K562 (cell line): ENCODE measurements at regions of chr22 and their contacts with region 1.

Region 1: DNA sequence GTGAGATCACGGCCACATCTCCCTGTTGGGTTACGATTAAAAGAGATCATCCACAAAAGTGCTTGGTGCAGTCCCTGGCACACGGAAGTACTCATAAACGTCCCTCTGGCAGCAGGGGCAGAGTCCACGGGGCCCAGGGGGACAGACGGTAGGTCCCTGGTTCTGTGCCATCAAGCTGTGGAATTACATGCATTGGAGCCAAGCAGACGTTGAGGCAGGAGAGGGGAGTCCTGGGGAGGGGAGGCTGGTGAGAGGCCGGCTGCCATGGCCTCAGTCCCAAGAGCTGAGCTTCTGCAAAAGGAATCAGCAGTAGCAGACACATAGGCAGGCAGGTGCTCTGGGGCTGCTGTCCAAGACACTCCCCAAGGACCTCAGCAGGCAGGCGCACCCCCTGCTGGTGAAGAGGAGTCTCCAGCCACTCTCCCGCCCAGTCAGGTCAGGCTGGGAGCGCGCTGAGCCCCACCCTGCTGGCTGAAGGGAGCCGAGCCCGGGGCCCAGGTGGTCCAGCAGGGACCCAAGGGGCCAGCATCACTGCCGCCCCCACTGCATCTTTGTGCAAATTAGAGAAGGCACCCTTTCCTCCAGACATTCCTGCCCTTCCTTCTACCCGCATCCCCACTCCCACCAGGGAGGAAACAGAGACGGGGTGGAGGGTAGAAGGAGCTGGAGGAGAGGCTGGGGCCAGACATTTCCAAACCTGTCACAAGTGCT is 7.6 kb upstream of the KCTD17 start:
- DNase-seq: peak; percentile 73 to 81 (median 74)
- ATAC-seq: peak; percentile 100
- H3K4me3 ChIP-seq: no peak overlapping the region
- H3K27ac ChIP-seq: no peak overlapping the region
- H3K4me1 ChIP-seq: peaks cover 0 to 7% of the 10 kb centered on the region in 2 experiments; a peak in 2 of 5 replicates
- H3K27me3 ChIP-seq: peaks cover 0 to 3% of the 10 kb centered on the region in 2 experiments; a peak in 1 of 5 replicates
- CTCF ChIP-seq: peak; percentile 75 to 85 (median 75)
- EP300 ChIP-seq: no peak
- POLR2A ChIP-seq: no peak
- RAD21 ChIP-seq: peak; percentile 58 to 74

Region 2: GRCh38 chr22:35712672-35713071 is 1331.3 kb before region 1 on chr22:
- CTCF ChIA-PET with region 1: no interaction called
- POLR2A ChIA-PET with region 1: no interaction called
- in situ Hi-C with region 1: no loop called
- intact Hi-C with region 1: no loop called
- DNase-seq: no peak
- ATAC-seq: no peak
- H3K4me3 ChIP-seq: no peak overlapping the region
- H3K27ac ChIP-seq: no peak overlapping the region
- H3K4me1 ChIP-seq: no peaks in the 10 kb centered on the region; a peak in 2 of 5 replicates
- H3K27me3 ChIP-seq: no peaks in the 10 kb centered on the region
- CTCF ChIP-seq: peak in 1 of 3 experiments; percentile 20; a peak in 1 of 6 replicates
- EP300 ChIP-seq: no peak
- POLR2A ChIP-seq: no peak
- RAD21 ChIP-seq: peak in 1 of 2 experiments; percentile 56; a peak in 2 of 4 replicates

Region 3: DNA sequence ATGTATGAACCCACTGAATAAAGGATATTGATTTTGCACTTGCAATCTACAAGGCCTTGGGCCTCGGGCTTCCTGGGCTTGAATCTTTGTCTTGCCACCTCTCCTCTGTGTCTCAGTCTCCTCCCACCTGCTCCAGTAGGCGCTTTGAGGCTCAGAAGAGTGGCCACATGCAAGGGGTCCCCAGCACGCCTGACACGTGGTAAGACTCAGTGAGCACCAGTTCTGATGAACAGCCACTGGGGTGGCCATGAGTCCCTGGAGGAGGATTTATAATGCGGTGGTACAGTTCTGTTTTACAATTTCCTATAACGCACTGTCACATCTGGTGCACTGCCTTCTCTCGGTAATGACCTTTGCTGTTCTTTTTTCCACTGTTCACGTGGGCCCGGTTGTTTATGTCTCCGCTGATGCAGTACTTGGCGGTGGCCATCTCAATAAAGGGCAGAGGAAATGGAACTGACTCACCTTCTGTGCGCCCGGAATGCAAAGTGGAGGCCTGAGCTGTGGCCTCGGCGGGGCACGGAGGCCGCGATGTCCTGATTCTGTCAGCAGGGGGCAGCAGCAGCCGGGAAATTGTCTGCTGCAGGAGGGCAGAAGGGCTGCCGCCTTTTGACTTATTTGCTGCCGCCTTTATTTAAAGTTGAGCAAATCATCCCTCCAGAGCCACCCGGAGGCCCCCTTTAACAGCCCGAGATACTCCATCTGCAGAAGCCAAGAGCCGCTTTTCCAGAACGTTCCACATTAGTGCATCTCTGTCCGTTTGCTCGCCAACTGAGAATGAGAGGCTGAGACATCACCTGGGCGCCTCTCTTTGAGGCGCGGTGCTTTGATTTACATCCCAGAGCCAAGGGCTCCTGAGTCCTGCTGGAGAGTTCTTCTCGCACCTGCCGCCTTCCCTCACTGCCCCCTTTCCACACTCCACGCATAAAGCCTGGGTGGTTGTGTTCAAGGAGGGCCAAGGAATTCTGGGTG is 262.0 kb before region 1 on chr22:
- CTCF ChIA-PET with region 1: no interaction called
- POLR2A ChIA-PET with region 1: no interaction called
- in situ Hi-C with region 1: no loop called
- intact Hi-C with region 1: loop called (anchors 10 kb)
- DNase-seq: peak; percentile 64 to 77 (median 75)
- ATAC-seq: peak; percentile 90
- H3K4me3 ChIP-seq: no peak overlapping the region
- H3K27ac ChIP-seq: no peak overlapping the region
- H3K4me1 ChIP-seq: no peaks in the 10 kb centered on the region; a peak in 1 of 5 replicates
- H3K27me3 ChIP-seq: peaks cover under 1 to 41% of the 10 kb centered on the region in 2 experiments; a peak in 4 of 5 replicates
- CTCF ChIP-seq: peak; percentile 79 to 85 (median 81)
- EP300 ChIP-seq: no peak
- POLR2A ChIP-seq: no peak
- RAD21 ChIP-seq: peak; percentile 73 to 80

Region 4: DNA sequence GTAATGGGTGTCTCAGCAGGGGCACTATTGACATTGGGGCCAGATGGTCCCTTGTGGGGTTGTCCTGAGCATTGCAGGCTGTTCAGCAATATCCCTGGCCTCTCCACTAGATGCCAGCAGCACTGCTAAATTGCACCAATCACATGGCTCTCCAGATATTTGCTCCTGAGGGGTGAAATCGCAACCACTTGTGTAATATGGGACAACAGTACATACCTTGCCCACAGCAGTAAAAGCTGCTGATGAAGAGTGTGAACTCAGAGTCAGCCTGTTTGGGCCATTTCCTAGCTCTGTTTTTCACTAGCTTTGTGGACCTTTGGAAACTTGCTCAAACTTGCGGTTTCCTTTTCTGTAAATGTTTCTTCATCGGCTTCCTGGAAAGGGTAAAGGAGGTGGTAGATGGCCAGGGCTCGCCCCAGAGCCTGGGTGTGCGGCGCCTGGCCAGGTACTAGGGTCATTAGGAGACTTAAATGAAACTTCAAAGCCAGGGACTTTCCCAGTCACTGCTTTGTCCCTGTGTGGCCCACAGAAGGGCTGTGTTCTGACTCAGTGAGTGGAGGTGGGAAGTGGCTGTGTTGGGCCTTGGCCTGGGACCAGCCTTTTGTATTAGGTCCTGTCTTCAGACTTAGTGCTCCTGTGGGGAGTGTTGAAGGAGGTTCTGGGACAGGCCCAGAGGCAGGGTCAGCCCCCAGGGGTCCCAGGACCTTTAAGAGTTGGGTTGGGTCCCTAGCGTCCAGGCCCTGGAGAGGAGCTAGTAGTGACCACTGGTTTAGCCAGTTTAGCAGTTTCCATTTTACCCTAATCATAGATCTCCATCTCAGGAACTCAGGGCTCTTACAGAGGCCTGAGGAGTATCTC is 170.1 kb before region 1 on chr22:
- CTCF ChIA-PET with region 1: no interaction called
- POLR2A ChIA-PET with region 1: no interaction called
- in situ Hi-C with region 1: no loop called
- intact Hi-C with region 1: loop called (anchors 10 kb)
- DNase-seq: peak; percentile 15 to 37 (median 20)
- ATAC-seq: peak; percentile 84
- H3K4me3 ChIP-seq: no peak overlapping the region
- H3K27ac ChIP-seq: no peak overlapping the region
- H3K4me1 ChIP-seq: 0 out of 5 replicates have a peak, but pooled peaks cover 0 to 2% of the 10 kb centered on the region in 2 experiments
- H3K27me3 ChIP-seq: peaks cover 4 to 26% of the 10 kb centered on the region in 2 experiments; a peak in 3 of 5 replicates
- CTCF ChIP-seq: peak; percentile 45 to 54 (median 48); a peak in 5 of 6 replicates
- EP300 ChIP-seq: no peak
- POLR2A ChIP-seq: no peak
- RAD21 ChIP-seq: peak; percentile 32 to 42; a peak in 3 of 4 replicates

Region 5: GRCh38 chr22:36986242-36986821 is 57.7 kb before region 1 on chr22:
- CTCF ChIA-PET with region 1: interaction called, 14 read pairs
- POLR2A ChIA-PET with region 1: interaction called, 3 read pairs
- in situ Hi-C with region 1: no loop called
- intact Hi-C with region 1: loop called (anchors 5 kb)
- DNase-seq: peak; percentile 43 to 59 (median 53)
- ATAC-seq: no peak
- H3K4me3 ChIP-seq: no peak overlapping the region
- H3K27ac ChIP-seq: no peak overlapping the region
- H3K4me1 ChIP-seq: peaks cover 13 to 17% of the 10 kb centered on the region in 2 experiments; a peak in 4 of 5 replicates
- H3K27me3 ChIP-seq: peaks cover 4 to 12% of the 10 kb centered on the region in 2 experiments; a peak in 4 of 5 replicates
- CTCF ChIP-seq: peak; percentile 55 to 83 (median 66)
- EP300 ChIP-seq: no peak
- POLR2A ChIP-seq: no peak
- RAD21 ChIP-seq: peak; percentile 29 to 63; a peak in 3 of 4 replicates

Region 6: GRCh38 chr22:37098976-37099591 is 55.1 kb after region 1 on chr22:
- CTCF ChIA-PET with region 1: no interaction called
- POLR2A ChIA-PET with region 1: no interaction called
- in situ Hi-C with region 1: no loop called
- intact Hi-C with region 1: no loop called
- DNase-seq: no peak
- ATAC-seq: peak; percentile 49; the same call in 1 of the 3 replicates
- H3K4me3 ChIP-seq: no peak overlapping the region
- H3K27ac ChIP-seq: no peak overlapping the region
- H3K4me1 ChIP-seq: no peaks in the 10 kb centered on the region
- H3K27me3 ChIP-seq: peaks cover 20 to 70% of the 10 kb centered on the region in 2 experiments; a peak in 3 of 5 replicates
- CTCF ChIP-seq: peak; percentile 22 to 28 (median 25); a peak in 3 of 6 replicates
- EP300 ChIP-seq: no peak
- POLR2A ChIP-seq: no peak
- RAD21 ChIP-seq: no peak

Region 7: DNA sequence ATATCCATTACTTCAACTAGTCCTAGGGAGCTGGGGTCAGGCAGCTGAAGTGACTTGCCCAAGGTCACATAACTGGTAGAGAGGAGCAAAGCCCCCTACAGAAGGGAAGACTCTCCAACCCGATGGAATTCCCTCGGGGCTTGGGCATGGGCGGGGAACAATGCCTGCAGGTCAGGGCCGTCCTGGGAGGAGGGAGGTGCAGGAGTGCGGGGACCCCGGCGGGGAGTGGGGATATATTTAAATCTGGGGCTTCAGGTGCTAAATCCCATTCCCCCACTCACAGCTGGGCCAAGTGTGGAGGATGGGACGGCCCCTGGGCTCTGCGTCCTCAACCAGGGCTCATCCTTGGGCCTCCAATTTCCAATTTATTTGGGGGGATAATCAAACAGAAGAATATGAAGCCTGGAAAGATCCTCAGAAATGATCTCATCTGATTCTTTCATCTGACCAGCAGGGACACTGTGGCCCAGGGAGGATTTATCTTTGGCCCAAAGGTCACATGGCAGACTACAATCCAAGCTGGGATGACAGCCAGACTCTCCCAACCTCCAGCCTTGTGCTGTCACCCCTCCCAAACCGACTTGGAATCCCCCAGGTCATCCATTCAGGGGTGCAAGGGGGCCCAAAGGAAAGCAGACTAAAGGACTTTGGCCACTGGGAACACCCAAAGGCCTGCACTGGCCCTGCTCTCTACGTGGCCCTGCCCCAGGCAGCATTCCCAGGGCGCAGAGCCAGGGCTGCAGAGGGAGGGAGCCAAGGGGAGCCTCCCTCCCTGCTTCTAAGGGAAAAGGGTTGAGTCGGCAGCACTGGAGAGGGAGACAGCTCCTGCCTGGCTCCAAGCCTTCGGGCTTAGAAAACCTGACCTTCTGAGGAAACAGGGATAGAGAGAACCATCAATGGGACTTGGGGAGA is 152.8 kb after region 1 on chr22:
- CTCF ChIA-PET with region 1: no interaction called
- POLR2A ChIA-PET with region 1: no interaction called
- in situ Hi-C with region 1: no loop called
- intact Hi-C with region 1: no loop called
- DNase-seq: no peak
- ATAC-seq: no peak
- H3K4me3 ChIP-seq: no peak overlapping the region
- H3K27ac ChIP-seq: no peak overlapping the region
- H3K4me1 ChIP-seq: peaks cover 23 to 40% of the 10 kb centered on the region in 2 experiments
- H3K27me3 ChIP-seq: no peaks in the 10 kb centered on the region
- CTCF ChIP-seq: peak in 1 of 3 experiments; percentile 26; a peak in 2 of 6 replicates
- EP300 ChIP-seq: no peak
- POLR2A ChIP-seq: no peak
- RAD21 ChIP-seq: no peak